Mammary epithelial cell (primary cell): ENCODE measurements at regions of chr1 and their contacts with region 1.

Region 1: DNA sequence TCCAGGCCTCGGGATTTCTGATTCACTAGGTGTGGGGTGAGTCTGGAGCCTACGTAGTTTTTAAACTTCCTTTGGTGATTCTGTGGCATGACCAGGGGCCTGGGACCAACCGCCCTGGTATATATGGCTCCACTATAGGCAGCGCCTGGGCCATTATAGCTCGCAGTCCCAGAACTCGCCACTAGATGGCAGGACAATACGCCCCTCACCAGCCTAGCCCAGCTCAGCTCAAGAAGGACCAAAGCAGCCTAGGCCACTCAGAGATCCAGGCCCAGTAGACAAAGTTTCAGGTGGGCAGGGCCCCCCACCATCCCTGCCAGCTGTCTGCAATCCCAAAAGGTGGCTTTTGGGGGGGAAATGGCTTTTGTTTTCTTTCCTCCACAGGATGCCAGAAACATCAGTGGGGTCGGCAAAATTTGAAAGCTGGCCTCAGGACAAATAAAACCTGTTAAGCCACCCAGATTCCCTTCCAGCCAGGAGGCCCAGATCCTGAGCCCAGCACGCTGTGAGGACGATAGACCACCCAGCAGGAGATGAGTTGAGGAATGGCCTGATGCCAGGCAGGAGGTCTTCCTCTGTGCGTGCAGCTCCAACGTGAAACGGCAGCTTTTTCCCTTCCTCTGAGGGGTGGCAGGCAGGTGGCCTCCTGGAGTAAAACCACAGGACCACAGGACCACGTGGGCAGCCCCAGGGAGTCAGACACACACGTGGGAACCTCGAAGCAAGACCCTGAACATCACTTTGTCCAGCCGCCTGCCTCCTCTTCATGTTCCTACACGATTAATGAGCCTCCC is 24.8 kb upstream of the TMEM51 start:
- DNase-seq: peak; percentile 53
- H3K4me3 ChIP-seq: no peak overlapping the region
- H3K27ac ChIP-seq: no peak overlapping the region
- H3K4me1 ChIP-seq: no peaks in the 10 kb centered on the region
- H3K27me3 ChIP-seq: no peaks in the 10 kb centered on the region
- CTCF ChIP-seq: peak; percentile 87 to 92

Region 2: DNA sequence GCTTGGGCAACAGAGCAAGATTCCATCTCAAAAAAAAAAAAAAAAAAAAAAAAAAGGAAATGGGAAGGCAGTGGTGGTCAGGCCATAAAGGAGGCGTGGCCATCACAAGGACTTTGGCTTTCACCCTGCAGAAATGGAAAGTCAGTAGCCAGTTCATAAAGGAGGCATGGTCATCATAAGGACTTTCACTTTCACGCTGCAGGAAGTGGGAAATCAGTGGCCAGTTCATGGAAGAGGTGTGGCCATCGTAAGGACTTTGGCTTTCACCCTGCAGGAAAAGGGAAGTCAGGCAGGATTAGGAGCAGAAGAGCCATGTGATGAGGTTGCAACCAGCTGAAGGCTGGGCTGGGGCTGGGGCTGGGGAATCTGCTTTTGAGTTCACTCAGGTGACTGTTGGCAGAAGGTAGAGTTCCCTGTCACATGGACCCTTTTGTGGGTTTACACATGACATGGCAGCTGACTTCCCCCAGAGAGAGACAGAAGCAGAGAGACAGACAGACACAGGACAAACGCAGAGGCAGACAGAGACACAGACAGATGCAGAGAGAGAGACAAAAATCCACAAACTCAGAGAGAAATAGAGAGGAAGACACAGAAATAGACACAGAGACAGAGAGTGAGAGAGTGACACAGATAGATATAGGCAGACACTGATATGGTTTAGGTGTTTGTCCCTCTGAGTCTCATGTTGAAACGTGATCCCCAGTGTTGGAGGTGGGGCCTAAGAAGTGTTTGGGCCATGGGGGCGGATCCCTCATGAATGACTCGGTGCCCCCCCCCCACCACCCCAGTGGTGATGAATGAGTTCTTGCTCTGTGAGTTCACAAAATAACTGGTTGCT is 794.2 kb before region 1 on chr1:
- CTCF ChIA-PET with region 1: no interaction called
- dilution Hi-C with region 1: no loop called
- in situ Hi-C with region 1: no loop called
- intact Hi-C with region 1: no loop called
- DNase-seq: no peak
- H3K4me3 ChIP-seq: no peak overlapping the region
- H3K27ac ChIP-seq: no peak overlapping the region
- H3K4me1 ChIP-seq: no peaks in the 10 kb centered on the region
- H3K27me3 ChIP-seq: no peaks in the 10 kb centered on the region
- CTCF ChIP-seq: no peak

Region 3: GRCh38 chr1:15272009-15272788 is 143.5 kb after region 1 on chr1:
- CTCF ChIA-PET with region 1: interaction called, 5 read pairs
- dilution Hi-C with region 1: no loop called
- in situ Hi-C with region 1: loop called in 1 of 2 experiments (anchors 10 kb)
- intact Hi-C with region 1: loop called (anchors 1 kb)
- DNase-seq: peak; percentile 70
- H3K4me3 ChIP-seq: no peak overlapping the region
- H3K27ac ChIP-seq: no peak overlapping the region
- H3K4me1 ChIP-seq: peaks cover 4% of the 10 kb centered on the region
- H3K27me3 ChIP-seq: no peaks in the 10 kb centered on the region
- CTCF ChIP-seq: peak; percentile 62 to 85

Region 4: GRCh38 chr1:15304701-15305467 is 176.2 kb after region 1 on chr1:
- CTCF ChIA-PET with region 1: no interaction called
- dilution Hi-C with region 1: no loop called
- in situ Hi-C with region 1: no loop called
- intact Hi-C with region 1: loop called (anchors 1 kb)
- DNase-seq: peak; percentile 52
- H3K4me3 ChIP-seq: no peak overlapping the region
- H3K27ac ChIP-seq: no peak overlapping the region
- H3K4me1 ChIP-seq: peaks cover 7% of the 10 kb centered on the region
- H3K27me3 ChIP-seq: no peaks in the 10 kb centered on the region
- CTCF ChIP-seq: peak; percentile 85 to 91